Naive thymus-derived CD8-positive, alpha-beta T cell (primary cell): ENCODE measurements at regions of chr9 and their contacts with region 1.

Region 1: GRCh38 chr9:128881901-128882681 is at the starts of genes KYAT1 and LRRC8A:
- DNase-seq: peak; percentile 95 to 98 (median 98)
- ATAC-seq: peak; percentile 95 to 96
- H3K4me3 Mint-ChIP-seq: peak within 1 kb of the TSS; percentile 91 to 99 (median 96)
- H3K27ac Mint-ChIP-seq: peak within 1 kb of the TSS; percentile 90 to 99 (median 96)
- H3K4me1 Mint-ChIP-seq: peaks cover 41 to 67% (median 64%) of the 10 kb centered on the region in 4 donors
- H3K27me3 Mint-ChIP-seq: no peaks in the 10 kb centered on the region
- polyA plus RNA-seq, gene KYAT1: 9.3 to 10.8 (median 10.4) TPM
- polyA plus RNA-seq, gene LRRC8A: 17.4 to 36.7 (median 22.1) TPM

Region 2: GRCh38 chr9:128798896-128799295 is 83.2 kb before region 1 on chr9:
- POLR2A ChIA-PET with region 1: no interaction called
- DNase-seq: no peak
- ATAC-seq: no peak
- H3K4me3 Mint-ChIP-seq: no peak overlapping the region
- H3K27ac Mint-ChIP-seq: no peak overlapping the region
- H3K4me1 Mint-ChIP-seq: peaks cover 0 to 2% (median 1%) of the 10 kb centered on the region in 4 donors
- H3K27me3 Mint-ChIP-seq: no peaks in the 10 kb centered on the region

Region 3: DNA sequence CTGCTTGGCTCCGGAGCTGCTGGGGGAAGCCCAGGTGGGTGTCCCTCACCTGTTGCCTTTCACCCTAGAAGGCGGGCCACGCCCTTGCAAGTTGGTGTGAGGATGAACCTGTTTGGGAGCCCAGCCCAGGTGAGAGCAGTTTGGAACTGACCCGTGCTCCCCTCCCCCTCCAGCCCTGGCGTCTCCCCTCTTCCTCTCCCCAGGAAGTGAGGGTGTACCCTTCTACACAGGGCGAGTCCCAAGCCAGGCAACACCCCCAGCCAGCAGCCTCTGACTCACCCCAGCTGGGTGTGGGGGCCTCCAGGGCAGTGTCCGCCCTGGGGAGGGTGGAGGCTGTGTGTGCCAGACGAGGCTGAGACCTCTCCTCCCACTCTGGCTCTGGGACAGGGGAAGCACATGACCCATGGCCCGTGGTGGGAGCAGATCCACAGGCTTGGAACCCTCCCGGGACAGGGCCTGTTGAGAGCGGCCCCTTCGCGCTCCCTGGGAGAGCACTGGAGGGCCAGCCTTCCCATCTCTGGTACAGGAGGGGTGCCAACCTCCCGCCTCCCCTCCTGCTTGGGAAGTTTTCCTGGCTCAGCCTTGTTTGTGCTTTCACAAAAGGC is 10.3 kb after region 1 on chr9:
- POLR2A ChIA-PET with region 1: interaction called, 23 read pairs
- DNase-seq: peak in 3 of 10 donors; percentile 11 to 65 (median 22)
- ATAC-seq: peak; percentile 64 to 71
- H3K4me3 Mint-ChIP-seq: peak overlapping the region in 5 of 10 donors; percentile 2 to 75 (median 19)
- H3K27ac Mint-ChIP-seq: peak overlapping the region in 9 of 10 donors; percentile 16 to 92 (median 80)
- H3K4me1 Mint-ChIP-seq: peaks cover 17 to 73% (median 64%) of the 10 kb centered on the region in 4 donors
- H3K27me3 Mint-ChIP-seq: no peaks in the 10 kb centered on the region

Region 4: GRCh38 chr9:128921881-128922763 is 40.0 kb after region 1 on chr9:
- POLR2A ChIA-PET with region 1: interaction called, 10 read pairs
- DNase-seq: peak in 9 of 10 donors; percentile 8 to 69 (median 31)
- ATAC-seq: peak; percentile 81 to 95
- H3K4me3 Mint-ChIP-seq: peak overlapping the region; percentile 41 to 84 (median 76)
- H3K27ac Mint-ChIP-seq: peak overlapping the region in 9 of 10 donors; percentile 48 to 92 (median 78)
- H3K4me1 Mint-ChIP-seq: peaks cover 8 to 25% (median 16%) of the 10 kb centered on the region in 4 donors
- H3K27me3 Mint-ChIP-seq: no peaks in the 10 kb centered on the region